Activated CD8-positive, alpha-beta T cell treated with anti-CD3 and anti-CD28 coated beads, Interleukin-2, amount 10 ng/mL, durations not matched to agents 7 days and 5 days (primary cell): ENCODE measurements at regions of chr1 and their contacts with region 1.

Region 1: DNA sequence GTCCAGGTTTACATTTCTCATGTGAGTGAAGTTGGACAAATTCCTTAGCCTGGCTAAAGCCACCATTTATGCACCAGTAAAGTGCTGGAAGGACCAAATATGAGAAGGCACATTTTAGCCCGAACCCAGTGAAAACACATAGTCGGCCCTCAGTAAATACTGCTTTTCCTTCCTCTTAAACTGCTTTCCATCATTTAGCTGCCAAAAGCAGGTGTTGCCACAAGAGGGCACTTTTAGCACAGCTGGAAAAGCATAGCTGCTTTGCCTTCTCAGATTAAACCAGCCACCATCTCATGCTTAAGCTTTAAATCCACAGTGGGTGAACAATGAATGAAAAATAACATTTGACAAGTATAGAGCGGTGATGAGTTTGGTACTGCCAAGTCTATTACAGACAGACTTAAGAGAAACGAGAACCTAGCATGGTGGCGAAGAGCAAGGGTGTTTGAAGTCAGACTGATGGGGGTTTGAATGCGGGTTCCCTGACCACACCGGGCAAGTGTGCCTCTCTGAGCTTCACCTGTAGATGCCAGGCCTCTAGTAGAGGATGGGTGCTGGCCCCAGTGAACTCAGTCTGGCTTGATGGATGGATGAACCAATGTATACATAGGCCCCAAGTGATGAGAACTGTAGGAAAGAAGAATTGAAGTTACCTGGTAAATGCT is 57.8 kb downstream of the SLC35D1 start:
- DNase-seq: peak; percentile 78
- ATAC-seq: peak; percentile 72
- H3K4me3 Mint-ChIP-seq: no peak overlapping the region
- H3K27ac Mint-ChIP-seq: no peak overlapping the region
- H3K4me1 Mint-ChIP-seq: peaks cover 20% of the 10 kb centered on the region
- H3K27me3 Mint-ChIP-seq: no peaks in the 10 kb centered on the region

Region 2: DNA sequence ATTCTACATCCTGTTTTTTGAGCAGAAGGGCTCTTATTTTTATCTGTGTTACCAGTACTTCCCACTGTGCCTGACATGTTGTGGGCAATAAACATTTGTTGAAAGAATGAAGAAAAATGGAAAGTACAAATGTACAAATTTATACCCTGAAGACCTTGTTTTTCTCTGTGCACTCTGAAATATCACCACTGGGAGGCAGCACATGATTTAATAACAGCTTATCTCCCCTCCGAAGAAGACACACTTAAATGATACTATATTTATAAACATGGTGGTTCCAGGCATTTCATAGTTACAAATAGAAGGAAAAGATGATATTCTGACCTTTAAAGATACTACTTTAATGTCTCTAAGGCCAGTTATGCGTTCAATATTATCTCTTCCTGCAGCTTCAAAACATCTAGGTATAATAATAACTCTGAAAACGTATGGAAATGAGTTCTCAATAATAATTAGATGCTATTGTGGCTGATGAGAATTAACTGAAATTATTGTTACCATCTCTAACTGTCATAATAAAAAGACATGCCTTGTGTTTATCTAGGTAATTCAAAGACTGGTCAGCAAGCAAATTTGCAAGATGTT is 231.1 kb before region 1 on chr1:
- CTCF ChIA-PET with region 1: interaction called, 18 read pairs
- POLR2A ChIA-PET with region 1: no interaction called
- DNase-seq: peak; percentile 72
- ATAC-seq: peak; percentile 63
- H3K4me3 Mint-ChIP-seq: no peak overlapping the region
- H3K27ac Mint-ChIP-seq: no peak overlapping the region
- H3K4me1 Mint-ChIP-seq: peaks cover 18% of the 10 kb centered on the region
- H3K27me3 Mint-ChIP-seq: peaks cover 5% of the 10 kb centered on the region

Region 3: DNA sequence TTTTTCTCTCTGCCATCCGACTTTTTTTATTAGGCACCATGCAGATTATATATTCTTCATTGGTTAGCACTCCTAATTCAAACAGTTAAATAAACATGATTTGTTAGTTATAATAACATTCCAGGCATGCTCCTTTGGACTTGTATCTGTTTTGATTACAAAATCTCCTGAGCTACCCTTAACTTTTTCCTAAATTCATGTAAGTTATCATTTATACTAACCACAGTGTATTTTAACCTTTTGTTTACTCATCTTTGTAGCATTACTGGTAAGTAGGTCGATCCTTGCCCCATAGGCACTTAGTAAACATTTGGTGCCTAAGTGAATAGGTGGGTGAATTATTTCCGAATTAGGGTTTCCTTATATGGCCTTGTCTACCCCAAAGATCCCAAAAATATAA is 27.6 kb before region 1 on chr1:
- CTCF ChIA-PET with region 1: no interaction called
- POLR2A ChIA-PET with region 1: no interaction called
- DNase-seq: no peak
- ATAC-seq: no peak
- H3K4me3 Mint-ChIP-seq: no peak overlapping the region
- H3K27ac Mint-ChIP-seq: no peak overlapping the region
- H3K4me1 Mint-ChIP-seq: no peaks in the 10 kb centered on the region
- H3K27me3 Mint-ChIP-seq: no peaks in the 10 kb centered on the region

Region 4: DNA sequence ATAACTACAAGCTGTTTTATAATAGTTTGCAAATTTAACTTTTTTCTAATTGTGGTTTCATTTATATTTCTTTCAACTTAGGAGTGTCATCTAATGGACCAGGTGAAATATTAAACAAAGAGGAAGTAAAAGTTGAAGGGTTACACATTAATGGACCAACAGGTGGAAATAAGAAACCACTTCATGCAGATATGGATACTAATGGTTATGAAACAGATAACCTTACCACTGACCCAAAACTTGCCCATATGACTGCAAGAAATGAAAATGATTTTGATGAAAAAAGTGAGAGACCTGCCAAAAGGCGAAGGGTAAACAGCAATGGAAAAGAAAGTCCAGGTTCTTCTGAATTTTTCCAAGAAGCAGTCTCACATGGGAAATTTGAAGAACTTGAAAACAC is 11.7 kb before region 1 on chr1:
- CTCF ChIA-PET with region 1: interaction called, 10 read pairs
- POLR2A ChIA-PET with region 1: interaction called, 4 read pairs
- DNase-seq: no peak
- ATAC-seq: no peak
- H3K4me3 Mint-ChIP-seq: no peak overlapping the region
- H3K27ac Mint-ChIP-seq: peak overlapping the region; percentile 20
- H3K4me1 Mint-ChIP-seq: peaks cover 28% of the 10 kb centered on the region
- H3K27me3 Mint-ChIP-seq: no peaks in the 10 kb centered on the region

Region 5: GRCh38 chr1:67053785-67054772 is 57.9 kb after region 1 on chr1 and contains the start of gene SLC35D1:
- CTCF ChIA-PET with region 1: interaction called, 13 read pairs
- POLR2A ChIA-PET with region 1: interaction called, 8 read pairs
- DNase-seq: peak; percentile 79
- ATAC-seq: peak; percentile 81
- H3K4me3 Mint-ChIP-seq: peak within 1 kb of the TSS; percentile 77
- H3K27ac Mint-ChIP-seq: peak within 1 kb of the TSS; percentile 91
- H3K4me1 Mint-ChIP-seq: peaks cover 20% of the 10 kb centered on the region
- H3K27me3 Mint-ChIP-seq: peaks cover 10% of the 10 kb centered on the region
- total RNA-seq, gene SLC35D1: 11.2 to 11.4 TPM

Region 6: GRCh38 chr1:67072749-67073148 is 76.6 kb after region 1 on chr1:
- CTCF ChIA-PET with region 1: no interaction called
- POLR2A ChIA-PET with region 1: no interaction called
- DNase-seq: no peak
- ATAC-seq: no peak
- H3K4me3 Mint-ChIP-seq: no peak overlapping the region
- H3K27ac Mint-ChIP-seq: no peak overlapping the region
- H3K4me1 Mint-ChIP-seq: no peaks in the 10 kb centered on the region
- H3K27me3 Mint-ChIP-seq: peaks cover 3% of the 10 kb centered on the region

Region 7: DNA sequence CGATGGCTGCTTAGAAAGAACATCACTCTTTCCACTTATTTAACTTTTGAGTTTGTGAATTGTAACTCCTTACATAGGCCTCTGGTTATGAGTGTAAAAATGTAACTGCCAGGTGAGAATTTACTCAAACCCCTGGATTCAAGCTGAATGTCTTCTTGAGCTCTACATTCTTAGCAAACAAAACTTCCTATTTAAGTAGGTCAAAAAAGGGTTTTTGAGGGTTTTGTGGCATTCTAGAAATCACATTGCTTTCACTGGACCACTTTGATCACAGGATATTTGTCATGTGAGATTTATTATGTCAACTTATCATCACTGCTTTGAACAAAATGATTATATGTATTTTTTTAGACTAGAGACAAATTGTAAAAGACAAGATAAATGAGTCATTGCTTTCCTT is 175.8 kb after region 1 on chr1:
- CTCF ChIA-PET with region 1: interaction called, 11 read pairs
- POLR2A ChIA-PET with region 1: no interaction called
- DNase-seq: no peak
- ATAC-seq: peak; percentile 31
- H3K4me3 Mint-ChIP-seq: peak overlapping the region; percentile 50
- H3K27ac Mint-ChIP-seq: peak overlapping the region; percentile 85
- H3K4me1 Mint-ChIP-seq: peaks cover 49% of the 10 kb centered on the region
- H3K27me3 Mint-ChIP-seq: peaks cover 7% of the 10 kb centered on the region

Region 8: DNA sequence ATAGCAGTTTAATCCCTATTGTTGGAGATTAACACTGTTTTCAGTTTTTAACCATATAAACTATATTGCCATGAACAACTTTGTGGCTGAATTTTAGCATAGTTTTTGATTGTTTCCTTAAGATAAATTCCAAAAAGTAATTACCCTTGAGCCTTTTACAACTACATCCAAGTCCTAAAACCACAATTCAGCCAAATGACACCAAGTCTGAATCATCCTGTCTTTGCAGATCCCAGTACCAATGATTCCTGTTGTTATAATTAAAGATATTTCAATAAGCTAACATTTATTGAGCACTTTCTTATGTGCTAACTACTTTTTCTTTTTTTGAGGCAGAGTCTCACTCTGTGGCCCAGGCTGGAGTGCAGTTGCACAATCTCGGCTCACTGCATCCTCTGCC is 205.7 kb after region 1 on chr1:
- CTCF ChIA-PET with region 1: no interaction called
- POLR2A ChIA-PET with region 1: no interaction called
- DNase-seq: no peak
- ATAC-seq: no peak
- H3K4me3 Mint-ChIP-seq: no peak overlapping the region
- H3K27ac Mint-ChIP-seq: no peak overlapping the region
- H3K4me1 Mint-ChIP-seq: peaks cover 3% of the 10 kb centered on the region
- H3K27me3 Mint-ChIP-seq: peaks cover 3% of the 10 kb centered on the region